ENCODE measurements at regions of chr6 and their contacts with region 1.

Region 1: DNA sequence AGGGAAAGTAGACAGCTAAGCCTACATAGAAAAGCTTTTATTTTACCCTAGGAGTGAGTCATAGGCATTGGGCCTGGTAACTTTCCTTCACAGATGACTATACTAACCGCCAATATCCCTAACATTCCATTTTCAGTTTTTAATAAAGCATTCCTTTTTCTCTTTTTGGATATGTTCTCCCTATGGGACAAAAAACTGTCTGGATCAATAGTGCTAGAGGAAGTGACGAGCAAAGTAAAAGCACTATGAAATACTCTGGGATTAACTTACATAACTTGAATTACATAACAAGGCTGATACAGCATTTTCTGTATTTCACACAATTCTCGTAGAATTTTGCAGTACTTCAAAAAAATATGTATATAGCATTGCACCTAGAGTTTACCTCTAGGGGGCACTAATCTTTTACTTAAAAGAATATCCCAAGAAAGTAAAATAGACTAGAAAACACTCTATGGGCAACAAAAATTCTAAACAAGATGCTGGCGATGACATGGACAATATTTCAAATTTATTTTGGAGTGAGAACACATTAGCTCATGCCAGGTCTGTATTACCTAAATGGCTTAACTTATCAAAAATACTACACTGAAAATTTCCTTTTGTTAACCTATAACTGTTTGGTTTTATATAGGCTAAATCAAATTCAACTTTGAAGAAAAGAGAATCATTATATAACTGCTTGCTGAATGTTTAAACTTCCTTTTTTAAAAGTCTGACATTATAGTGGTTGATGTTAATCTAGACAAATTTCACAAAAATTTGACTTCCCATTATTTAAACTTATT is 66.3 kb upstream of the DST start:
- DNase-seq: no peak
- ATAC-seq: no peak
- H3K4me3 Mint-ChIP-seq: no peak overlapping the region
- H3K27ac Mint-ChIP-seq: no peak overlapping the region
- H3K4me1 Mint-ChIP-seq: no peaks in the 10 kb centered on the region
- H3K27me3 Mint-ChIP-seq: peaks cover 3% of the 10 kb centered on the region
- CTCF ChIP-seq: peak; percentile 45

Region 2: DNA sequence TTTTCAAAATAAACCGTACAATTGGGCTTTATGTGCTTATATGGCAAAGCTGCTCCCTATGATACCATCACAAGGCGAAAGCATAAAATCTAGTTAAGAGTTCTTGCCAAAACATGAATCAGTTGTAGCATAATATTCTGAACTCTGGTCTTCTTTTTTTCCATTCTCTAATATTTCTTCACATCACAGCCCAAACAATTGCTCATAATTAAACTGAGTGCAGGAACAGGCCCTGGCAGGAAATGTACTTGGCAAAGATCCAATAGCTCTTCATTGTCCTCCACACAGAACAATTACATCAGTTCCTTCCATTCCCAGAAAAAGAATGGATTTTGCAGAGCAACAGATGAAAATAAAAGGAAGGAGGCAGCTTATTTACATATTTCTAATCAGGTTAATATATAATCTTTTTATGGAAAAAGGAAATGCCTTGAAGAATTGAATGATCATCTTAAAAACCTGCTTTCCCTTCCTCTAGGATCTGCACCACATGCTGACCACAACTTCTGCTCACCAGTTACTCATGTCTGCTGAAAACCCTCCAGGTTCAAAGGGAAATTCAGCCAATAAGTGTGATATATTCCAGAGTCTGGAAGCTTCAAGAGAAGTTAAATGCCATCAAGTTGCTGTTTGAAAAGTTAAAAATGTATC is 338.3 kb before region 1 on chr6:
- CTCF ChIA-PET with region 1: no interaction called
- POLR2A ChIA-PET with region 1: no interaction called
- intact Hi-C with region 1: no loop called
- DNase-seq: no peak
- ATAC-seq: no peak
- H3K4me3 Mint-ChIP-seq: no peak overlapping the region
- H3K27ac Mint-ChIP-seq: no peak overlapping the region
- H3K4me1 Mint-ChIP-seq: peaks cover 7% of the 10 kb centered on the region
- H3K27me3 Mint-ChIP-seq: no peaks in the 10 kb centered on the region
- CTCF ChIP-seq: no peak

Region 3: DNA sequence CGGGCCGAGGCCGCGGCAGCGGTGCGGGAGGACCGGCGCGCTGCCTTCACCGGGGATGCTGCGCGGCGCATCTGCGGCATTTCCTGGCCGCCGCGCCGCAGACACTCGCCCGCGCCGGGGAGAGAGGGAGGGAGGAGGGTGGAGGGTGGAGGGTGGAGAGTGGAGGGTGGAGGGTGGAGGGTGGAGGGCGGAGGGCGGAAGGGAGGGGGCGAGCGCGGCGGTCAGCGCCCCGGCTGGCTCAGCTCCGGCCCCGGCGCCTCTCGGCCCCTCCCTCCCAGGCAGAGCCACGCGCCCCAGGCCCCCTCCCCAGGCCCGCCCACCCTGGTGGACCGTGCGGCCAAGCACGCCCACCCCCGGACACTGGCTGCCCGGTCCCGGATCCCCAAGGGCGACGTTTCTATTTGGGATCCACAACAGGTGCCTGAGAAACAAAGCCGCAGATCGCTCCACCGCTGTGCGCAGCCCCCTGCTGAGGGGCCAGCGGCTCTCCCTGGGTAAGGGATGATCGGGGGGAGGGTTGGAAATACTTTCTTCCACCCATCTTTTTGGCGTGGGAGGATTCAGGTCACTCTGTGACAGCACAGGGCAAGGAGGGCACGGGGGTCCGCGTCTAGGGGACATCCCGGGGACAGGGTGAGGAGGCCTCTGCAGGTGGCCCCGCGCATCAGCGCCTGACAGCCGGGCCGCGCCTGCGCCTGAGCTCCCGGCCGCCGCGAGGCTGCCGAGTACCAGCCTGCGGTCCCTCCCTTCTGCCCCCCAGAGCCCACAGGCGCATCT is 134.8 kb after region 1 on chr6:
- CTCF ChIA-PET with region 1: interaction called, 12 read pairs
- POLR2A ChIA-PET with region 1: no interaction called
- intact Hi-C with region 1: no loop called
- DNase-seq: peak; percentile 73
- ATAC-seq: peak; percentile 97
- H3K4me3 Mint-ChIP-seq: peak overlapping the region; percentile 58
- H3K27ac Mint-ChIP-seq: no peak overlapping the region
- H3K4me1 Mint-ChIP-seq: peaks cover 6% of the 10 kb centered on the region
- H3K27me3 Mint-ChIP-seq: peaks cover 56% of the 10 kb centered on the region
- CTCF ChIP-seq: no peak

Region 4: DNA sequence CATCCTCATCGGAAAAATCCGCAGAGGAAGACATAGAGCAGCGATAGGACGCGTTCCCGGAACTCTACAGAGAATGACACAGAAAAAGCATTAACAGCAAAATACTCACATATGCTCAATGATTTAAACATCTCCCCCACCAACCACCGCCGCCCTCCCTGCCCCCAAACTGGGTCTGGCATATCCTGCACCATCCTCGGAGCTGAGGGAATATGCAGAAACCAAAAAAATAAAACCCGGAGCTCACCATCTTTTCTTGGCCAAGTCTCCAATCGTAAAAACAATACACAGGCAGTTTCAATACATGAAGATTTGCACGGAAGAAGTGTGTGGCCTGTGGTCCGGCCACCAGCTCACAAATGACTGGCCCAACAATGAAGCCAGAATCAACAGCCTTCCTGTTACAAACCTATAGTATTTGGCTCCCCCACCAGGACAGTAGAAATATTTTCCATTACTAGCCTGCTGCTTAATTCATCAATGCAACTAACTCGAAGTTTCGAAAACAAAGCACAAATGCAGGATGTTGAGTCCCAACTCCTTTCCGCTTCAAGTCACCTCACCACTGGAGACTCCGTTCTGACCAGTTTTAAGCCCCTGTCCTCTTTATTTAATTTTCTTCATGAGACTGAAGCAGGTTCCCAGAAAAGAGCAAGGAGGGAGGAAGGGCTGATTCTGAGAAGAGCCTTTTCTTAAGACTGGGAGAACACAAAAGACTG is 142.7 kb after region 1 on chr6:
- CTCF ChIA-PET with region 1: interaction called, 12 read pairs
- POLR2A ChIA-PET with region 1: no interaction called
- intact Hi-C with region 1: loop called (anchors 5 kb)
- DNase-seq: peak; percentile 70
- ATAC-seq: peak; percentile 91
- H3K4me3 Mint-ChIP-seq: peak overlapping the region; percentile 54
- H3K27ac Mint-ChIP-seq: no peak overlapping the region
- H3K4me1 Mint-ChIP-seq: peaks cover 13% of the 10 kb centered on the region
- H3K27me3 Mint-ChIP-seq: peaks cover 45% of the 10 kb centered on the region
- CTCF ChIP-seq: peak; percentile 43

Region 5: DNA sequence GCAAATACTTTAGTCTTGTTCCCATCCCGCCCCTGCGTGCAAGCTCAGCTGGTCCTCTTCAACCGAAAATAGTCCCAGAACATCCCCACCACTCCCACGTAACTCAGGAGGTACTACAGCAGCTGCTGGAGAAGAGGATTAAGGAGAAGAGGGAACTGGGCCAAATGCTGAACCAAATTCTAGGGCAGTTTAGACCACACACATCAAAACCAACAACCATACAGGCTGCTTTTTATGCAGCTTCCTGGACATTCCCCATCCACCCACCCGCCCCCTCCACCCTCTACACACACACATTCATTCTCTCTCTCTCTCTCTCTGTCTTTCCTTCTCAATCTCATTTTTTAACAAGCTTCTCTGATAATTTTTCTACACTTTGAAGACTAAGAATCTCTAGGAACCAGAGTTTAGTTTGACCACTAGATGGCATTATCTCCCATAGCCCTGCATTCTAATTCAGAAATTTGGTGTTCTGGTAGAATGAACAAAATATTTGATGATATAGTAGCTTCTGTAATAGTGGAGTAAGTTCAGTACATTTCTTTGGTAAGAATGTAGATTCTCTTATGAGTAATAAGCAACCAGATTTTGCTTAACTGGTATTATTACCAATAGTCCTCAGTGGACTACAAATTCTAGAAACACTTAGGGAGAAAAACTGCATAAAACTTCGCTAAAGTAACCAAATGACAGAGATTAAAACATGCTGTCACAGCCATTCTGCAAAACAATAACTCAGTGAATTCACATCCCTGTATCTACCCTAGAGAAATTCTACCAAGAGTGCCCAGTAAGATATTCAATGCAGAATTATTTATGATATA is 193.8 kb after region 1 on chr6:
- CTCF ChIA-PET with region 1: no interaction called
- POLR2A ChIA-PET with region 1: no interaction called
- intact Hi-C with region 1: no loop called
- DNase-seq: no peak
- ATAC-seq: no peak
- H3K4me3 Mint-ChIP-seq: no peak overlapping the region
- H3K27ac Mint-ChIP-seq: no peak overlapping the region
- H3K4me1 Mint-ChIP-seq: no peaks in the 10 kb centered on the region
- H3K27me3 Mint-ChIP-seq: peaks cover 4% of the 10 kb centered on the region
- CTCF ChIP-seq: peak; percentile 62

Measured in activated CD8-positive, alpha-beta T cell treated with anti-CD3 and anti-CD28 coated beads for 36 hours (primary cell).